CD4-positive, alpha-beta T cell (primary cell): ENCODE measurements at regions of chr7 and their contacts with region 1.

Region 1: GRCh38 chr7:22559829-22560489 is 60.0 kb upstream of the STEAP1B start:
- DNase-seq: peak; percentile 40 to 83 (median 56)
- ATAC-seq: peak; percentile 96
- H3K4me3 ChIP-seq: no peak overlapping the region
- H3K4me3 Mint-ChIP-seq: no peak overlapping the region
- H3K27ac ChIP-seq: no peak overlapping the region
- H3K27ac Mint-ChIP-seq: no peak overlapping the region
- H3K4me1 ChIP-seq: peaks cover 21% of the 10 kb centered on the region
- H3K4me1 Mint-ChIP-seq: peaks cover 28% of the 10 kb centered on the region
- H3K27me3 ChIP-seq: peaks cover 3 to 5% of the 10 kb centered on the region in 2 experiments
- H3K27me3 Mint-ChIP-seq: peaks cover 21% of the 10 kb centered on the region
- CTCF ChIP-seq: peak; percentile 73

Region 2: DNA sequence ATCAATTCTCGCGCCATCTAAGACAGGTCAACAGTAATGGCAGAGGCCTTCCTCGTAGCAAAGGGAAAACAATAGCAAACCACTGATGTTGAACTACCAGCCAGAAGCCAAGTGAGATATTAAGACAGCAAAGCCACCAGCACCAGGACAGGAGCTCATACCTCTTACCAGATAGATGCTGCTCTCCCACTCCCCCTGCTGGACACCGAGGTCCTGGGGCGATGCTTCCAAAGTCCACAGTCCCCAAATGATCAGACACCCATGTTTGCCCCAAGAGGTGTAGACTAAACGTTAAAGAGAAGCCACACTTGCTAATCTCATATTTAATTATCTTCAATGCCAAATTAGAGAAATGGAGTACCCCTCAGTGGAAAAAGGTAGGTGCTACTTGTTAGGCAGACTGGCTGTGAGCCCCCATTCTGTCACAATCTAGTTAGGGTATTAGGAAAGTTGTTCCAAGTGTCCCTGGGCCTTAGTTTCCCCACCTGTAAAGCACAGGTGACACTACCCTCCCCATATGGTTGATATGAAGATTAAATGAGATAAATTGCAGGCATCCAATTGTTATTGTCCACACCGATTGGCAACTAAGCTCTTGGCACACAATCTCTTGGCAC is 222.8 kb after region 1 on chr7:
- CTCF ChIA-PET with region 1: interaction called, 5 read pairs
- POLR2A ChIA-PET with region 1: no interaction called
- intact Hi-C with region 1: loop called (anchors 1 kb)
- DNase-seq: peak; percentile 48 to 80 (median 64)
- ATAC-seq: peak; percentile 71
- H3K4me3 ChIP-seq: no peak overlapping the region
- H3K4me3 Mint-ChIP-seq: no peak overlapping the region
- H3K27ac ChIP-seq: no peak overlapping the region
- H3K27ac Mint-ChIP-seq: no peak overlapping the region
- H3K4me1 ChIP-seq: no peaks in the 10 kb centered on the region
- H3K4me1 Mint-ChIP-seq: no peaks in the 10 kb centered on the region
- H3K27me3 ChIP-seq: no peaks in the 10 kb centered on the region
- H3K27me3 Mint-ChIP-seq: no peaks in the 10 kb centered on the region
- CTCF ChIP-seq: peak; percentile 69

Region 3: DNA sequence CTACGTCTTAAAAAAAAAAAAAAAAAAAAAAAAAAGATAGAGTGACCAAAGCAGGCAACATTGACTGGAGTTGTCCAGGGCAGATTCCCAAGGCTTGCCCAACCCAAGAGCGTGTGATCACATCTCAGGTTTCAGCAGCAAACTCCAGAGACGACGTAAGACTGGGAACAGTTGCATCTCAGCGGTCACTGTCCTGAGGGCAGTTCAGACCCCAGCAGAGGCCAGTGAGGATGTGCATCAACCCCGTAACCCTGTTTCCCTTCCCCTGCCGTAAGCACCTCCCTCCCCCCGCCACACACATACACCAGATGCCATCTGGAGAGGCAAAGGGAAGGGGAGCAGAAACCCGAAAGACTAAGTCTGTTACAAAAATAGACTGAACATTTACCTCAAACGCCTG is 282.0 kb after region 1 on chr7:
- CTCF ChIA-PET with region 1: no interaction called
- POLR2A ChIA-PET with region 1: no interaction called
- intact Hi-C with region 1: no loop called
- DNase-seq: no peak
- ATAC-seq: no peak
- H3K4me3 ChIP-seq: no peak overlapping the region
- H3K4me3 Mint-ChIP-seq: no peak overlapping the region
- H3K27ac ChIP-seq: no peak overlapping the region
- H3K27ac Mint-ChIP-seq: no peak overlapping the region
- H3K4me1 ChIP-seq: no peaks in the 10 kb centered on the region
- H3K4me1 Mint-ChIP-seq: no peaks in the 10 kb centered on the region
- H3K27me3 ChIP-seq: peaks cover 5 to 6% of the 10 kb centered on the region in 2 experiments
- H3K27me3 Mint-ChIP-seq: peaks cover 4% of the 10 kb centered on the region
- CTCF ChIP-seq: no peak